ENCODE measurements at regions of chr1 and their contacts with region 1.

Region 1: DNA sequence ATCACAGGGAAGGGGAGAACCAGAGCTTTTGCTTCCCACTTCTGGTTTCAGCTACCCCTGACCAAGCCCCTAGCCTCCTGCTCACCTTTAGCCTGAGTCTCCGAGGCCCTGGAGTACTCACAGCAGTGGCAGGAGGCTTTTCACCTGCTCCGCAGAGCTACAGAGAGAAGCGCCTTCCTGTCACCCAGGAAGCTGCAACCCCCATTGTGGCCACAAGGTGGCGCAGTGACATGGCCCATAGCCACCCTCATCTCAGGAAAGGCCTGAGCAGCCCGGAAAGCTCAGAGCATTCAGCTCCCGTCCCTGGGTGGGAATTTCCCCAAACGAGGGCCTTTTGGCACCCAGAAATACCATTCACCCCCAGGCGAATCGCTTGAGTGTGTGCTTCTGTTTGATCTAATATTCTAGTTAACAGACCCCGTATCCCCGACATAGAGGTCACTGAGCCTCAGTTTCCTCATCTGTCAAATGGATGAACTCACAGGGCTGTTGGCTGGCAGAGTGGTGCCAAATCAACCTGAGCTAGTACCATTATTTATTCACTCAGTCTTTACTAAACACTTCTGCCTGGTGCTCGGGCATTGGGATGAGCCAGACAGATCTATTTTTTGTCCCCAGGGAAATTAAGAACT is 25.3 kb downstream of the A3GALT2 start:
- DNase-seq: peak; percentile 39
- H3K4me3 ChIP-seq: no peak overlapping the region
- H3K27ac ChIP-seq: no peak overlapping the region
- H3K4me1 ChIP-seq: no peaks in the 10 kb centered on the region
- H3K27me3 ChIP-seq: no peaks in the 10 kb centered on the region
- CTCF ChIP-seq: peak; percentile 84 to 86
- POLR2A ChIP-seq: no peak

Region 2: GRCh38 chr1:33137800-33138199 is 157.8 kb before region 1 on chr1:
- CTCF ChIA-PET with region 1: interaction called, 7 read pairs
- POLR2A ChIA-PET with region 1: no interaction called
- dilution Hi-C with region 1: no loop called
- intact Hi-C with region 1: loop called (anchors 2 kb)
- DNase-seq: peak; percentile 50
- H3K4me3 ChIP-seq: no peak overlapping the region
- H3K27ac ChIP-seq: no peak overlapping the region
- H3K4me1 ChIP-seq: no peaks in the 10 kb centered on the region
- H3K27me3 ChIP-seq: peaks cover 2 to 3% of the 10 kb centered on the region in 2 experiments
- CTCF ChIP-seq: peak; percentile 51 to 80
- POLR2A ChIP-seq: no peak

Region 3: DNA sequence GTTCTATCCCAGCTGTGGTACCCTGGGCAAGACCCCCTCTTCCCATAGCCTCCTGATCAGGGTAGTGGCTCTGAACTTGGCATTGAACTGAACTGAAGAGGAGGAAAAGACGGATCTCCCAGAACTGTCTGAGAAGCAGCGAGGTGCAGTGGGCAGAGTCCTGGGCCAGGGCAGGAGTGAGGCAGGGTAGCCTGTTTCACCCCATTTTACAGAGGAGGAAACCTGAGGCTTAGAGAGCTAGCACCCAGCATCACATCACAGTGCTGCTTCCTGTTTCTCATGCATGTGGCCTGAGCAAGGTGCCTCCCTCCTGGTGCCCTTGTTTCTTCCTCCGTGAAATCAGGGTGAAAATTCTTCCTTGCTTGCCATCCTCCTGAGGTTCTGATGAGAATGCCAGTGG is 22.2 kb before region 1 on chr1:
- CTCF ChIA-PET with region 1: interaction called, 14 read pairs
- POLR2A ChIA-PET with region 1: no interaction called
- dilution Hi-C with region 1: no loop called
- intact Hi-C with region 1: no loop called
- DNase-seq: no peak
- H3K4me3 ChIP-seq: no peak overlapping the region
- H3K27ac ChIP-seq: no peak overlapping the region
- H3K4me1 ChIP-seq: no peaks in the 10 kb centered on the region
- H3K27me3 ChIP-seq: no peaks in the 10 kb centered on the region
- CTCF ChIP-seq: no peak
- POLR2A ChIP-seq: no peak

Region 4: DNA sequence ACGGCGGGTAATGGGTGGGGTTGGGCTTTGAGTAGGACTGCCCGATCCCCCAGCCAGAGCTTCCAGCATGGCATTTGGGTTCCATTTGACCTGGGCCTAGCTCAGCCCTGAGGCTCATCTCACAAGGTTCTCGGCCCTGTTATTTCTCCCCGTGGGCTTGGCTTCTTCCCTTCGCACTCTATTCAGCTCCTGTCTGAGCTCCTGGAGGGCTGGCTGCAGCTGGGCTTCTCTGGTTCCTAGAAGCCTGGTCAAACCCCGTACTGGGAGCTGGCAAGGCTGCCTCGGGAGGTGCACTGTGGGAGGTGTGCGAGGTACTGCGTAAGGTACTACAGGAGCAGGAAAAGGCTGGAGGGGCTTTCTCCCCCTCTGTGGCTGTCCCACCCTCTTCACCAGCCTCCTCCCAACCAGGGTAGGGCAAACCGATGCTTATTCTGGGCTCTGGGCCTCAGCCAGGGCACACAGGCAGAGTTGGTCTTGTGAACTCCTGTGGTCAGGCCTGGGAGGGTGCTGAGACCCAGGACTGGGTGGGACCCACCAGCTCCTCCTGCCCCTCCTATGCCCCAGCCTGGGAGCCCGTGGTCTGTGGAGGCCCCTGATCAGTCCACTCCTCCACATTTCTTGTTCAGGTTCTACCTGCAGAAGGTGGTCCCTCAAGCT is 24.5 kb after region 1 on chr1:
- CTCF ChIA-PET with region 1: interaction called, 10 read pairs
- POLR2A ChIA-PET with region 1: no interaction called
- dilution Hi-C with region 1: no loop called
- intact Hi-C with region 1: no loop called
- DNase-seq: no peak
- H3K4me3 ChIP-seq: no peak overlapping the region
- H3K27ac ChIP-seq: no peak overlapping the region
- H3K4me1 ChIP-seq: no peaks in the 10 kb centered on the region
- H3K27me3 ChIP-seq: no peaks in the 10 kb centered on the region
- CTCF ChIP-seq: no peak
- POLR2A ChIP-seq: no peak

Region 5: GRCh38 chr1:33374336-33375105 is 79.0 kb after region 1 on chr1:
- CTCF ChIA-PET with region 1: interaction called, 95 read pairs
- POLR2A ChIA-PET with region 1: no interaction called
- dilution Hi-C with region 1: no loop called
- intact Hi-C with region 1: no loop called
- DNase-seq: no peak
- H3K4me3 ChIP-seq: no peak overlapping the region
- H3K27ac ChIP-seq: no peak overlapping the region
- H3K4me1 ChIP-seq: no peaks in the 10 kb centered on the region
- H3K27me3 ChIP-seq: no peaks in the 10 kb centered on the region
- CTCF ChIP-seq: no peak
- POLR2A ChIP-seq: no peak

Region 6: DNA sequence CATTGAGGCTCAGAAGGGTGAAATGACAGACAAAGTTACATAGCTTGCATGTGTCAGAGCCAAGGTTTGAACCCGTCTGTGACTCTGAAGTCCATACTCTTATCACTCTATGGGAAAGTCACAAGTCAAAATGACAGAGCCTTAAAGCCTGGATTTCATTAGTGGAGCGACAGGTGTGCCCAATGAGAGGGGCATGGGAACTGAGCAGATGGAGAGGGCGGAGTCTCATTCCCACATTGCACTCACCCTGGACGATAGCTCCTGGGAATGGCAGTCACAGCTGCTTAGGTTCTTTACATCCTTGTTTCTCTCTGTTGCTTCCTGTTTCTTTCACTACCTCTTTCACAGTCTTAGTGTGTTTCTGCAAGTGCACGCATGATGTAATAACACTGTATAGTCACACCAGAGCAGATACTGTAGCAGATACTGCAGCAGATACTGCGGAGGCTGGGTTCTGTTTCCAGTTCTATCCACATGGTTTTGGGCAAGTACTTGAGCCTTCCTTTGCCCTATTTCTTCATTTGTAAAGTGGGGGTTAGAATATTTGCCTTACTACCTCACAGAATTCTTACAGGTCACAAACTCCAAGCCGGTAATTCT is 304.1 kb after region 1 on chr1:
- CTCF ChIA-PET with region 1: no interaction called
- POLR2A ChIA-PET with region 1: no interaction called
- dilution Hi-C with region 1: no loop called
- intact Hi-C with region 1: no loop called
- DNase-seq: no peak
- H3K4me3 ChIP-seq: no peak overlapping the region
- H3K27ac ChIP-seq: no peak overlapping the region
- H3K4me1 ChIP-seq: no peaks in the 10 kb centered on the region
- H3K27me3 ChIP-seq: no peaks in the 10 kb centered on the region
- CTCF ChIP-seq: no peak
- POLR2A ChIP-seq: no peak

Region 7: GRCh38 chr1:33610864-33611455 is 315.4 kb after region 1 on chr1:
- CTCF ChIA-PET with region 1: interaction called, 21 read pairs
- POLR2A ChIA-PET with region 1: no interaction called
- dilution Hi-C with region 1: no loop called
- intact Hi-C with region 1: loop called (anchors 5 kb)
- DNase-seq: no peak
- H3K4me3 ChIP-seq: no peak overlapping the region
- H3K27ac ChIP-seq: no peak overlapping the region
- H3K4me1 ChIP-seq: no peaks in the 10 kb centered on the region
- H3K27me3 ChIP-seq: no peaks in the 10 kb centered on the region
- CTCF ChIP-seq: no peak
- POLR2A ChIP-seq: no peak

Measured in endothelial cell of umbilical vein (primary cell).